Common myeloid progenitor, CD34-positive (primary cell): ENCODE measurements at regions of chr6 and their contacts with region 1.

Region 1: GRCh38 chr6:73695619-73696421 is at the start of gene CD109:
- DNase-seq: peak; percentile 87 to 97 (median 96)
- H3K4me3 ChIP-seq: peak within 1 kb of the TSS; percentile 73 to 97 (median 85)
- H3K27ac ChIP-seq: peak within 1 kb of the TSS; percentile 86 to 94
- H3K4me1 ChIP-seq: peaks cover 31 to 52% (median 45%) of the 10 kb centered on the region in 4 experiments
- H3K27me3 ChIP-seq: no peaks in the 10 kb centered on the region

Region 2: DNA sequence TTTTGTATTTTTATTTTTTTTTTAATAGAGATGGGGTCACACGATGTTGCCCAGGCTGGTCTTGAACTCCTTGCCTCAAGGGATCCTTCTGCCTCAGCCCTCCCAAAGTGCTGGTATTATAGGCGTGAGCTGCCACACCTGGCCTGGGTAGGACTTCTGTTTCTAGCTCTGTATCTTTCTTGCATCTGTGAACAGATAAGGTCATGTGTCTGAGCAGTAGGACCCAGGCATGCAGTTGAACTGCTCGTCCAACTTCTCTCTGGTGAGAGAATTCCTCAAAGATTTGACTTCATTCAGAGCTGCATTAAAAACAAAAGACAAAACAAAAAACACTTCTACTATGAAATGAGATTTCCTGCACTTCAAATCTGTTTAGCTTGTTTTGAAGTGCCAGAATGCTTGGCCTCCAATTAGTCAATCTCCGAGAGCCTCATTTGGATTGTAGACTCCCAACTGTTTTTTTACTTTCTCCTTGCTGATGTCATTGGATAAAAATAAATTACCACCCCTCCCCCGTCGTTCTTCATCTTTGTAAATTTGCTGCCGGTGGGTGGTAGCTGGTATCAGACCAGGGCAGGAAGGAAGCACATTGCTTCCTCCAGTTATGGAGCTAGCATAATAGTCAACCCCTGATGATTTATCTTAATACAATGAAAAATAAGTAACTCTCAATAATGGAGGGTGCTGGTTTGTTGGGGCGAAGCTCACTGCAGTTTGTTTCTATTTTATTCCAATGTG is 17.8 kb after region 1 on chr6:
- CTCF ChIA-PET with region 1: interaction called, 19 read pairs
- POLR2A ChIA-PET with region 1: interaction called, 7 read pairs
- DNase-seq: peak; percentile 94 to 99 (median 99)
- H3K4me3 ChIP-seq: peak overlapping the region in 5 of 7 experiments; percentile 33 to 62 (median 46)
- H3K27ac ChIP-seq: peak overlapping the region; percentile 83 to 92
- H3K4me1 ChIP-seq: peaks cover 11 to 50% (median 47%) of the 10 kb centered on the region in 4 experiments
- H3K27me3 ChIP-seq: no peaks in the 10 kb centered on the region

Region 3: GRCh38 chr6:73854998-73855718 is 159.3 kb after region 1 on chr6:
- CTCF ChIA-PET with region 1: no interaction called
- POLR2A ChIA-PET with region 1: no interaction called
- DNase-seq: peak; percentile 67 to 84 (median 80)
- H3K4me3 ChIP-seq: no peak overlapping the region
- H3K27ac ChIP-seq: no peak overlapping the region
- H3K4me1 ChIP-seq: no peaks in the 10 kb centered on the region
- H3K27me3 ChIP-seq: no peaks in the 10 kb centered on the region